ENCODE measurements at regions of chr12 and their contacts with region 1.

Region 1: GRCh38 chr12:14845350-14845750 is 2.0 kb upstream of the ART4 start:
- DNase-seq: peak; percentile 81
- H3K4me3 ChIP-seq: no peak overlapping the region
- H3K27ac ChIP-seq: no peak overlapping the region
- H3K4me1 ChIP-seq: peaks cover 68% of the 10 kb centered on the region
- H3K27me3 ChIP-seq: no peaks in the 10 kb centered on the region
- CTCF ChIP-seq: peak; percentile 55 to 61
- POLR2A ChIP-seq: no peak

Region 2: DNA sequence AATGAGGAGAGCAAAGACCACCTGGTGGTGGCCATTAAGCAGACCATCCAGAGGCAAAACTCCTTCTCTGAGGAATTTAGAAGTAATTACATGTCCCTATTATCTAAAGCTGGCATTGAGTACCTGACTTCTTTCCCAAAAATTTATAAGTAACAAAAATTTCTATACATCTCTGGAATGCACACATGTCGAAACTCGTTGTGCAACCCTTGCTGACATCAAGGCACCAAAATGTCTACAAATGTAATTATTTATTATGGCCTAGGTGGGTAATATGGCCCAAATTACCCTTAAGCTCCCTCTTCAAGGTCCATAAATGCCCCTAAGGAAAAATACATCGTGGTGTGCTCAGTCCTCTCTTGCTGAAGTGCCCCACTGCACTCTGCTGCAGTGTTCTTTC is 105.9 kb before region 1 on chr12:
- CTCF ChIA-PET with region 1: no interaction called
- POLR2A ChIA-PET with region 1: no interaction called
- dilution Hi-C with region 1: no loop called
- intact Hi-C with region 1: no loop called
- DNase-seq: no peak
- H3K4me3 ChIP-seq: no peak overlapping the region
- H3K27ac ChIP-seq: no peak overlapping the region
- H3K4me1 ChIP-seq: no peaks in the 10 kb centered on the region
- H3K27me3 ChIP-seq: peaks cover 2 to 4% of the 10 kb centered on the region in 2 experiments
- CTCF ChIP-seq: no peak
- POLR2A ChIP-seq: no peak

Region 3: DNA sequence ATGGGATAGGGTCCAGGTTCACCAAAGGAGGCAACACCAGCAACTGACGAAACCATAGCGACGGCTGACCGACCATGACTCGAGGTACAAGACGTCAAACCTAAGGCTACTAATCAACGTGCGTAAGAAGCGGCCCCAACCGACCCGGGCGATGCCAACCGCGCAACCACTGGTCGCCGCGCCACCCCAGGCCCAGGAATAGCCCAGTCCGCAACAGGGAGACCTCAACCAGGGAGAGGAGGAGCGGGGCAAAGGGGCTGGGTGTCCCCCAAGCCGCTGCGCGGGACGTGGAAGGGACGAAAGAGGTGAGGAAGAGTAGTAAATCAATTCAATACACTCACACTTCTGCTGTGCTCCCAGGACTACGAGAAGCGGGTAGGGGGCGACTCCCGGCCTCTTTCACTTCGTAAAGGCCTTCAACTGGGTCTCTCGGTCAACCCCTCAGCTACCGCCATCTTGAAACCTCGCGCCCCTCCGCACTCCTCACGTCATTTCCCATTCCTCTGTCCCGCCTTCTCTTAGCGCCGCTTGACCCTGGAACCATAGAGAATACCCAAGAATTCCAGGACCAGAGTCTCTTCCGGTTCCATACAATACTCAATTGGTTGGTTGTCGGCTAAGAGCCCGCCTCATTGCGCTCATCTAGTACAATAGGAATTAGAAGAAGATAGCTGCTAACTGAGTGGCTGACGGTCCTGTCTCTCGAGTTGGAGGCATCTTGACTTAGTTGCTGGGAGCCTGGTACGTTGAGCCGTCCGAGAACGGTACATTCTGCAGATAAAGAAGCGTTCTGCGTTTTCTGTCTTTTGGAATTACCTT is 42.1 kb before region 1 on chr12 and contains the starts of genes C12orf60 and WBP11:
- CTCF ChIA-PET with region 1: interaction called, 3 read pairs
- POLR2A ChIA-PET with region 1: interaction called, 6 read pairs
- dilution Hi-C with region 1: no loop called
- intact Hi-C with region 1: loop called (anchors 1 kb)
- DNase-seq: peak; percentile 99
- H3K4me3 ChIP-seq: peak within 1 kb of the TSS; percentile 82 to 98 (median 97)
- H3K27ac ChIP-seq: peak within 1 kb of the TSS; percentile 90
- H3K4me1 ChIP-seq: peaks cover 17% of the 10 kb centered on the region
- H3K27me3 ChIP-seq: no peaks in the 10 kb centered on the region
- CTCF ChIP-seq: no peak
- POLR2A ChIP-seq: peak; percentile 92
- total RNA-seq, gene C12orf60: 1.1 and 1.3 TPM in 2 replicates
- total RNA-seq, gene WBP11: 70.5 and 77.1 TPM in 2 replicates

Region 4: DNA sequence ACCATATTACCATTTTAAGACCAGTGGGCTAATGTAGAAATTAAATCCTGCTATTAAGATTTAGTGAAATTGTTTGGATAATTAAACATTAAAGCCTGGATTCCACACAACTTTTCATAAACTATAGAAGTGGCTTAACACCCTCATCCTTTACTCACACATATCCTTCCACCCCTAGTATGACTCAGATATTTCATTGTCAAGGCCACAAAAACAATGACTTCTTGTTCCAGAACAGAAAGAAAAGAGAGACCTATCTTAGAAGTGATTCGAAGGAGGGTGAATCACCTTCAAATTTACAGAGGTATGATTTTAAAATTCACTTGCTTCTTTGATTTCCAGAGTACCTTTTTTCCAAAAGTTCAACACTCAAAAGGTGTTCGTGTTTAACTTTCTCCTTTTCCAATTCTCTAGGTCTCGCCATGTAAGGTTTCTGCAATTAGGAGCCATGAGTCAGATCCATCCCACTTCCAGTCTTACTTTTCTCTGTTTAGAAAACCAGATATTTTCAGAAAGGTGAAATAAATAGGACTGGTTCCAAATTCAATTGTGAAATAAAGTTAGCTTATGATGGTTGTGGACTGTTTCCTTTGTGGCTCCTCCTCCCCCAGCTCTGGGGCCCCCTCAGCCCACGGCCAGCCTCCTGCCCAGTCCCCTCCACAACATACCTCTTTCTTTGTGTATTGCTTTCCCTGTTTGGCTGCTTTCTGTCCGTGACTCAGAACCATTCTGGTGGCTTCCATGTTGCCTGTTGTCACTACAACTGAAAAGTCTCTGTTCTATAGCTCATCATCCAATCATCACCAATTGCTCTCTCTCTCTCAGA is 65.0 kb after region 1 on chr12:
- CTCF ChIA-PET with region 1: no interaction called
- POLR2A ChIA-PET with region 1: no interaction called
- dilution Hi-C with region 1: no loop called
- intact Hi-C with region 1: loop called (anchors 1 kb)
- DNase-seq: peak; percentile 87
- H3K4me3 ChIP-seq: no peak overlapping the region
- H3K27ac ChIP-seq: peak overlapping the region; percentile 69
- H3K4me1 ChIP-seq: peaks cover 27% of the 10 kb centered on the region
- H3K27me3 ChIP-seq: no peaks in the 10 kb centered on the region
- CTCF ChIP-seq: no peak
- POLR2A ChIP-seq: peak; percentile 32

Region 5: GRCh38 chr12:14960548-14961465 is 115.5 kb after region 1 on chr12:
- CTCF ChIA-PET with region 1: interaction called, 4 read pairs
- POLR2A ChIA-PET with region 1: no interaction called
- dilution Hi-C with region 1: no loop called
- intact Hi-C with region 1: loop called (anchors 1 kb)
- DNase-seq: peak; percentile 83
- H3K4me3 ChIP-seq: peak overlapping the region; percentile 57 to 78 (median 64)
- H3K27ac ChIP-seq: peak overlapping the region; percentile 80
- H3K4me1 ChIP-seq: peaks cover 52% of the 10 kb centered on the region
- H3K27me3 ChIP-seq: no peaks in the 10 kb centered on the region
- CTCF ChIP-seq: no peak
- POLR2A ChIP-seq: no peak

Region 6: GRCh38 chr12:15088105-15088504 is 242.8 kb after region 1 on chr12:
- CTCF ChIA-PET with region 1: no interaction called
- POLR2A ChIA-PET with region 1: no interaction called
- dilution Hi-C with region 1: no loop called
- intact Hi-C with region 1: no loop called
- DNase-seq: no peak
- H3K4me3 ChIP-seq: no peak overlapping the region
- H3K27ac ChIP-seq: no peak overlapping the region
- H3K4me1 ChIP-seq: no peaks in the 10 kb centered on the region
- H3K27me3 ChIP-seq: peaks cover 0 to 3% of the 10 kb centered on the region in 2 experiments
- CTCF ChIP-seq: no peak
- POLR2A ChIP-seq: no peak

Region 7: DNA sequence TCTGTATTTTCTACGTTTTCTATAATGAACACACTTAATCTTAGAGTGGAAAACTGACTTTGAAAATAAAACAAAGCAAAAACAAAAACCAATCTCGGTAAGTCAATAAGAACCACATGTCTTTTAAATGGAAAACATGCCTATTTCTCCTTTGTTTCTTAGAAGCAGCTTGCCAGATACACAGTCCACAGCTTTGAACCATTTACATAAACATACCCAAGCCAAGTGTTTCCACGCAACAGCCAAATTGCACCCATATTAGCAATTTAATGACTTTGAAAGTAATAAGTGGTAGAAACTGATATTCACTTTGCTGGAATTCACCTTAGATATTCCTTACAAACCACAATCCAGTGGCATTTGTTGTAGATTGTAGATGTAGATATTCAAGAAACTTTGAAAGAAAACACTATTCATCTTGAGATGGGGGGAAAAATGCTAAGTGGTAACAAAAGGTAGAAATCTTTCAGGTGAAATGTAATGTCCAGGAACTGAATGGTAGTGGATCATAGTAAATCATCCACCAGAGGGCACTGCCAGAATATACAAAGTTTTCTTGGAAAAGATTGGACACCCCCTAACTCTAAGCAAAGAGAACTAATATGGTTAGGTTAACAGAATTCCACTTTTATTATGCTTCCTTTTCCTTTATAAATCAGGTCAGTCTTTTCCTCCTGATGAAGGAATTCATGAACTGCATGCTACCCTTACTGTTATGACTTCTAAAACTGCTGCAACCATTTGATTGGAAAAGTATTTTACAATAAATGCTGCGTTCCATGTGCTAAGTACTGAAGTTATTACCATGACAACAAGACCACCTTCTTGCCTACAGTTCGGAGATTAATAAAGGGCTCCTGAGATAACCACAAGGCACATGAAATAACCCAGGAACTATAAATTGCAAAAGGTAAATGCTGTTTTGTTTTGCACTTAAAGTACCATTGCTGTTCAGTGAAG is 306.1 kb after region 1 on chr12:
- CTCF ChIA-PET with region 1: no interaction called
- POLR2A ChIA-PET with region 1: no interaction called
- dilution Hi-C with region 1: no loop called
- intact Hi-C with region 1: loop called (anchors 2 kb)
- DNase-seq: peak; percentile 50
- H3K4me3 ChIP-seq: no peak overlapping the region
- H3K27ac ChIP-seq: no peak overlapping the region
- H3K4me1 ChIP-seq: no peaks in the 10 kb centered on the region
- H3K27me3 ChIP-seq: peaks cover 0 to 2% of the 10 kb centered on the region in 2 experiments
- CTCF ChIP-seq: peak; percentile 9 to 40
- POLR2A ChIP-seq: no peak

Measured in endothelial cell of umbilical vein (primary cell).